ENCODE measurements at regions of chr11 and their contacts with region 1.

Region 1: DNA sequence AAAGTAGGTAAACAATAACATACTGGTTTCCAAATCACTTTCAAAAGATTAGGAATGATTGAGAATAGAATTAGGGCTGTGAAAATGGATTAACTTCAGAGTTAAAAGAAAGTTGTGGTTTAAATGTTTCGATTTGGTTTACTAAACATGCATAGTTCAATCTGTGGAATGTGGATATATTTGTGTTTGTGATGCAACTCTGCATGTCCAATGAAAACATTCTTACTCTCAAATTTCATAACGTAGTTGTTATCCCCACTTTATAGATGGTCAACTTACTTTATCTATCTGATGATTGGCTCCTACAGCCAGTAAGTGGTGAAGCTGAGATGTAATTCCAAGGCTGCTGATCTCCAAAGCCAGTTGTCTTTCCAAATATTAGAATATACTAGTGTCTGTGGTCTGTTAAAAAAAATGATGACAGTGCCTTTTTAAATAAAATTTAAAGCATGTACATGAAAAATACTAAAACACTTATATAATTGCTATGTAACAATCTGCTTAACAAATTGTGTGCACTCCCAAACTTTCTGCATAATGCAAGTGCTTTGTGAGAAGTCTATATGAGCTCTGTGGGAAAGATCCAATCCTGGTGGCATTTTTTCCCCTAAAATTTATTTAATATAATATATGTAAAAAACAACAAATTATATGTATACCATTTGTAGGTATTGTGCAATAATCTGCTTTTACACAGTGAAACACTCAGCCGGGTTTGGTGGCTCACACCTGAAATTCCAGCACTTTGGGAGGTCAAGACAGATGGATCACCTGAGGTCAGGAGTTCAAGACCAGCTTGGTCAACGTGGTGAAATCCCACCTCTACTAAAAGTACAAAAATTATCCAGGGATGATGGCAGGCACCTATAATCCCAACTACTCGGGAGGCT is 9.7 kb upstream of the SIK3 start:
- DNase-seq: peak in 1 of 2 experiments; percentile 72
- H3K4me3 ChIP-seq: no peak overlapping the region
- H3K27ac ChIP-seq: no peak overlapping the region
- H3K4me1 ChIP-seq: 0 out of 2 replicates have a peak, but pooled peaks cover 11% of the 10 kb centered on the region
- H3K27me3 ChIP-seq: no peaks in the 10 kb centered on the region
- CTCF ChIP-seq: no peak

Region 2: DNA sequence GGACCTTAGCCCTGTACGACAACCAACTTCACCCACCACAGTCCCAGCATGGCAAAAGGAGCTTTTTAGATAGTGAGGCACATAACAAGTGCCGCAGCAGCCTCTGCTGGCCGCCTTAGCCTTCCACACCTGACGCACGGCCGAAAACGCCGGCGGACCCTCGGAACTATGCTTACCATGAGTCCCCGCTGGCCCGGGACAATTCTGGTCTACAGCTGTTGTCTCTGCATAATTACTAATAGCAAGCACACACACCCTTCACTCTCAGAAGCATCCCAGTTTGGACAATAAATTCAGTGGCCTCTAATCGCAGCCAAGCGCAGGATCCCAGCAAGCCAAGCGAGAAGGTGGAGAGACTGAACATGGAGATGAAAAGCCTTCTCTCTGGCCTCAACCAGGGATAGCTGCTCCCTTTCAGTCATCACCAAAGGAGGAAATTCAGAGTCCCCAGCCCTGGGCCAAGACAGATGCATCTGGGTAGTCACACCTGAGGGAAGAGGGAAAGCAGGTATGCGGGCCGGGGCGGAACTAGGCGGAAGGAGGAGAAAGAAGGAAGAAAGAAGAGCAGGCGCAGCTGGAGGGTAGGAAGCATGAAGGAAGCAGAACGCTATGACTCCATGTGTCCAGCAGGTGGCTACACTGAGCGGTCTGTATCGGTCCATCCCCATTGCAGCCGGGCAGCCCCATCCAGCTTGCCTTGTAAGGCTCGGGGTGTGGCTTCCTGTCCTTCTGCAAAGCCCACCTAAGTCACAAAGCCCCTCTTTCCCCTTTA is 375.5 kb before region 1 on chr11:
- CTCF ChIA-PET with region 1: interaction called, 7 read pairs
- POLR2A ChIA-PET with region 1: no interaction called
- intact Hi-C with region 1: loop called (anchors 5 kb)
- DNase-seq: peak in 1 of 2 experiments; percentile 45
- H3K4me3 ChIP-seq: no peak overlapping the region
- H3K27ac ChIP-seq: no peak overlapping the region
- H3K4me1 ChIP-seq: no peaks in the 10 kb centered on the region
- H3K27me3 ChIP-seq: peaks cover 49% of the 10 kb centered on the region
- CTCF ChIP-seq: peak; percentile 89

Region 3: GRCh38 chr11:116787786-116788486 is 320.0 kb before region 1 on chr11 and contains the start of gene ZPR1:
- CTCF ChIA-PET with region 1: interaction called, 11 read pairs
- POLR2A ChIA-PET with region 1: no interaction called
- intact Hi-C with region 1: loop called (anchors 1 kb)
- DNase-seq: peak; percentile 68 to 69
- H3K4me3 ChIP-seq: peak within 1 kb of the TSS; percentile 76
- H3K27ac ChIP-seq: no peak within 1 kb of the TSS; the same call in 1 of the 2 replicates
- H3K4me1 ChIP-seq: peaks cover 17% of the 10 kb centered on the region
- H3K27me3 ChIP-seq: no peaks in the 10 kb centered on the region
- CTCF ChIP-seq: no peak
- total RNA-seq, gene ZPR1: 29.6 and 33.0 TPM in 2 replicates

Region 4: GRCh38 chr11:117134431-117134830 is 26.5 kb after region 1 on chr11:
- CTCF ChIA-PET with region 1: interaction called, 14 read pairs
- POLR2A ChIA-PET with region 1: no interaction called
- intact Hi-C with region 1: no loop called
- DNase-seq: peak; percentile 56
- H3K4me3 ChIP-seq: no peak overlapping the region
- H3K27ac ChIP-seq: no peak overlapping the region
- H3K4me1 ChIP-seq: no peaks in the 10 kb centered on the region
- H3K27me3 ChIP-seq: no peaks in the 10 kb centered on the region
- CTCF ChIP-seq: no peak

Region 5: GRCh38 chr11:117166491-117166890 is 58.5 kb after region 1 on chr11:
- CTCF ChIA-PET with region 1: no interaction called
- POLR2A ChIA-PET with region 1: no interaction called
- intact Hi-C with region 1: no loop called
- DNase-seq: no peak
- H3K4me3 ChIP-seq: no peak overlapping the region
- H3K27ac ChIP-seq: no peak overlapping the region
- H3K4me1 ChIP-seq: no peaks in the 10 kb centered on the region
- H3K27me3 ChIP-seq: no peaks in the 10 kb centered on the region
- CTCF ChIP-seq: no peak

Region 6: DNA sequence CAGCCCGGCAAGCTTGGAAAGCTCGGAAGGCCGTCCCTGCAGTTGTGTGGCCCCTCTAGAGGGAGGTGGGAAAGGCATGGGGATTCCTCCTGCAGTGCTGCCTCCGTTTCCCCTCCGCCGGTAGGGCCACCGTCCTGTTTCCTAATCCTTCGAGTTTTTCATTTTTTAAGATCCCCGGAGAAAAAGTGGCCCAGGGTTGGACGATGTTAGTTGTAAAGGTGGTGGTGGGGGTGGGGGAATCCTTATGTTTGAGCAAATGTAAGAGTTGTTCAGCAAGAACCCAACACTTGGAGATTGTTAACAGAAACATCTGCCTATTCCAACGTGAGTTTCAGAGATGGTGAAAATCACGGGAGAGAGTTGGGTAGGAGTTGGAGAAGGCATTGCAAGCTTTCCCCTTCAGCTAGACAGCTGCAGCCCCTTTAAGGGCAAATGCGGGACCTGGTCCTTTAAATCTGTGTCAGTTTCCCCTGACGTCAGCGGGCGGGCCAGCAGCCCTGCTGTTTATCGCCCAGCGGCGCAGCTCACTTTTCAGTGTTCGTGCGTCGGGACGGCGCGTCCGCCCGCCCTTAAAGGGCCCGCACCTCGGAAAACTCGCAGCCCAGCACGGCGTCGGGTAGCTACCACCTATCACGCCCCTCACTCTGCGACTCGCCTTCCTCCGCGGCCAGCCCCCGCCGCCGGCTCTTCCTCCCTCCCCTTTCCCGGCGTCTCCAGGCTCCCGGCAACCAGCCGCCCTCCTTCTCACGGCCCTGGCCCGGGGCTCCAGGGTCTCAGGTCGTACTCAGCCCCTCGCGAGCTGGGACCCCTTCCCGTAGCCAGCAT is 70.5 kb after region 1 on chr11 and contains the start of gene SIDT2:
- CTCF ChIA-PET with region 1: interaction called, 11 read pairs
- POLR2A ChIA-PET with region 1: no interaction called
- intact Hi-C with region 1: no loop called
- DNase-seq: peak; percentile 85 to 87
- H3K4me3 ChIP-seq: peak within 1 kb of the TSS; percentile 63
- H3K27ac ChIP-seq: no peak within 1 kb of the TSS
- H3K4me1 ChIP-seq: peaks cover 19% of the 10 kb centered on the region
- H3K27me3 ChIP-seq: no peaks in the 10 kb centered on the region
- CTCF ChIP-seq: no peak
- total RNA-seq, gene SIDT2: 20.1 and 20.3 TPM in 2 replicates